ENCODE measurements at regions of chr3 and their contacts with region 1.

Region 1: DNA sequence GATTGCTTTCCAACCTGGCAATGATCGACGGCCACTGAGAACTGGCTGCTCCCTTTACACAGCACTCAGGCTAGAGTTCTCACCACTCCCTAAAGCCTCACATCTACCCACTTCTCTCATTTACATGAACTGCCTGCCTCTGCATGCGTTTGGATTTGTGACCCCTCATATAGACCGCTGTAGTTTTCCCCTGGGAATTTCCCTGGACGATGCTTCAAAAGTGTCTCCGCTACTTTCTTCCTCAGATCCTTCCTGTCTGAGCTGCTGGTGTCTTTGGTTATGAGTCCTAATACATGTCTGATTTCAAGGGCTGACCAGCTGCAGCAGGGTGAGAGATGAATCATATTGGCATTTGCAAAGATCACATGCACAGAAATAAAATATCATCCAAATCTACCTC is 116.7 kb upstream of the ETV5 start:
- DNase-seq: no peak
- ATAC-seq: no peak
- H3K4me3 ChIP-seq: no peak overlapping the region
- H3K4me3 Mint-ChIP-seq: no peak overlapping the region
- H3K27ac ChIP-seq: no peak overlapping the region
- H3K27ac Mint-ChIP-seq: no peak overlapping the region
- H3K4me1 ChIP-seq: no peaks in the 10 kb centered on the region
- H3K4me1 Mint-ChIP-seq: no peaks in the 10 kb centered on the region
- H3K27me3 ChIP-seq: no peaks in the 10 kb centered on the region
- H3K27me3 Mint-ChIP-seq: peaks cover 11% of the 10 kb centered on the region
- CTCF ChIP-seq: no peak

Region 2: GRCh38 chr3:185605566-185605965 is 620.0 kb before region 1 on chr3:
- CTCF ChIA-PET with region 1: no interaction called
- POLR2A ChIA-PET with region 1: no interaction called
- intact Hi-C with region 1: no loop called
- DNase-seq: no peak
- ATAC-seq: no peak
- H3K4me3 ChIP-seq: no peak overlapping the region
- H3K4me3 Mint-ChIP-seq: no peak overlapping the region
- H3K27ac ChIP-seq: no peak overlapping the region
- H3K27ac Mint-ChIP-seq: peak overlapping the region; percentile 29
- H3K4me1 ChIP-seq: no peaks in the 10 kb centered on the region
- H3K4me1 Mint-ChIP-seq: peaks cover 4% of the 10 kb centered on the region
- H3K27me3 ChIP-seq: no peaks in the 10 kb centered on the region
- H3K27me3 Mint-ChIP-seq: no peaks in the 10 kb centered on the region
- CTCF ChIP-seq: no peak

Region 3: GRCh38 chr3:186057594-186057993 is 168.0 kb before region 1 on chr3:
- CTCF ChIA-PET with region 1: no interaction called
- POLR2A ChIA-PET with region 1: no interaction called
- intact Hi-C with region 1: no loop called
- DNase-seq: no peak
- ATAC-seq: no peak
- H3K4me3 ChIP-seq: no peak overlapping the region
- H3K4me3 Mint-ChIP-seq: no peak overlapping the region
- H3K27ac ChIP-seq: no peak overlapping the region
- H3K27ac Mint-ChIP-seq: no peak overlapping the region
- H3K4me1 ChIP-seq: peaks cover 9% of the 10 kb centered on the region
- H3K4me1 Mint-ChIP-seq: peaks cover 14% of the 10 kb centered on the region
- H3K27me3 ChIP-seq: peaks cover 0 to 3% of the 10 kb centered on the region in 2 experiments
- H3K27me3 Mint-ChIP-seq: peaks cover 39% of the 10 kb centered on the region
- CTCF ChIP-seq: no peak

Region 4: DNA sequence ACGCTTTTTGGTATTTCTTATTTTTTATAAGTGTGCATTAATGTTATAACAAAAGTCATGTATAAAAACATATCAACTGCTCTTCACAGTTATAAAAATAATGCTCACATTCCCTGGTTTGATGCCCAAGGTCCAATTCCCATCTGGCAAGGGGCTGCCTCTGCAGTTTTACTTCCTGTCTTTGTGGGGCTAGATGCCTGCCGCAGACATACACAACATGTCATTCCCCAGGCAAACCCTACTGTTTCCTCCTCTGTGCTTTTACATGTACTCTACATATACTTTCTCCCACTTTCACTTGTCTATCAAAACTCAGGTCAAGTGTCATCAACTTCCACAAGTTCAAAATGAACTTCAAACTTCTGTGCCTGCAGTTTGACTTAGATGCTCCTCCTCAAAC is 56.2 kb before region 1 on chr3:
- CTCF ChIA-PET with region 1: no interaction called
- POLR2A ChIA-PET with region 1: no interaction called
- intact Hi-C with region 1: loop called in 1 of 2 experiments (anchors 2 kb)
- DNase-seq: no peak
- ATAC-seq: no peak
- H3K4me3 ChIP-seq: no peak overlapping the region
- H3K4me3 Mint-ChIP-seq: no peak overlapping the region
- H3K27ac ChIP-seq: no peak overlapping the region
- H3K27ac Mint-ChIP-seq: no peak overlapping the region
- H3K4me1 ChIP-seq: no peaks in the 10 kb centered on the region
- H3K4me1 Mint-ChIP-seq: peaks cover 4% of the 10 kb centered on the region
- H3K27me3 ChIP-seq: no peaks in the 10 kb centered on the region
- H3K27me3 Mint-ChIP-seq: peaks cover 10% of the 10 kb centered on the region
- CTCF ChIP-seq: no peak